Naive thymus-derived CD8-positive, alpha-beta T cell (primary cell): ENCODE measurements at regions of chr5 and their contacts with region 1.

Region 1: DNA sequence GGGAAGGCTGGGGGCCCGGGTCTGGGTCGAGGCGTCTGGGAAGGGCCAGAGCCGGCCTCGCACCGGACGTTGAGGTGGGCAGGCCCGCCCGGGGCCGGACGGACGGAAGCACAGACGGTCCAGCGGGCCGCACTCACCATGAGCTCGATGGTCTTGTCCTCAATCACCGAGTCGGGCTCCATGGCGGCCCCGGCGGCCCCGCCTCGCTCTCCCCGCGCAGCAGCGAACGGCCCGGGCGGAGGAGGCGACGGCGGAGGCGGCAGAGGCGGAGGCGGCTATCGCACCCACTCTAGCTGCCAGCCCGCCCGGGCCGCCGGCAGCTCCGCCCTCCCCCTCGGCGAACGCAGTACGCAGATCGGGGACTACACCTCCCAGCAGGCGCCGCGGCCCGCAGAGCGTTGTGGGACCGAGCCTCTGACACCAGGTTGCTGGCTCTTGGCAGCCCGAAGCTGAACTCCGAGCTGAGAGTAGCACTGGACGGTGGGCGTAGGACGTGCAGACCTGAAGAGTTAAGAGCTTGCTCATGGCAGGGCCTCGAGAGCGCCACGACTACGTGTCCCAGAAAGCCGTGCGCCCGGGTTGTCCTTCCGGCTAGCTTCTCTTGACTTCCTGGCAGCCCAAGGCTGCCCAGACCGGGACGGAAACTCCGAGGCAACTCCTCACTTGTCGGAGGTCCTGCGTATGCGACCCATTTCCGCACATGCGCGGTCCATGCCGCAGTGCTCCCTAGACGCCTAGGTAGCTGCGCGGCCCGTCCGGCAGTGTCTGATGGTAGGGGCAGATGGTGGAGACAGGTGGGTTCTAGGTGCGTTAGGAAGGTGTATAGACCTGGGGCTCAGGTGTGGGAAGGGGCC is at the start of gene FBXW11:
- DNase-seq: peak; percentile 86 to 98 (median 93)
- ATAC-seq: peak; percentile 87 to 89
- H3K4me3 Mint-ChIP-seq: peak within 1 kb of the TSS; percentile 93 to 100 (median 98)
- H3K27ac Mint-ChIP-seq: peak within 1 kb of the TSS; percentile 98 to 100 (median 99)
- H3K4me1 Mint-ChIP-seq: peaks cover 34 to 53% (median 51%) of the 10 kb centered on the region in 4 donors
- H3K27me3 Mint-ChIP-seq: no peaks in the 10 kb centered on the region
- polyA plus RNA-seq, gene FBXW11: 13.5 to 18.3 (median 16.2) TPM

Region 2: GRCh38 chr5:171387345-171387969 is 619.1 kb before region 1 on chr5 and contains the start of gene NPM1:
- POLR2A ChIA-PET with region 1: interaction called, 19 read pairs
- DNase-seq: peak; percentile 94 to 99 (median 98)
- ATAC-seq: peak; percentile 84 to 86
- H3K4me3 Mint-ChIP-seq: peak within 1 kb of the TSS; percentile 91 to 99 (median 98)
- H3K27ac Mint-ChIP-seq: peak within 1 kb of the TSS; percentile 98 to 100 (median 100)
- H3K4me1 Mint-ChIP-seq: peaks cover 25 to 56% (median 46%) of the 10 kb centered on the region in 4 donors
- H3K27me3 Mint-ChIP-seq: peaks cover 0 to 7% (median 0%) of the 10 kb centered on the region in 5 donors
- polyA plus RNA-seq, gene NPM1: 960 to 1,086 (median 1,032) TPM

Region 3: DNA sequence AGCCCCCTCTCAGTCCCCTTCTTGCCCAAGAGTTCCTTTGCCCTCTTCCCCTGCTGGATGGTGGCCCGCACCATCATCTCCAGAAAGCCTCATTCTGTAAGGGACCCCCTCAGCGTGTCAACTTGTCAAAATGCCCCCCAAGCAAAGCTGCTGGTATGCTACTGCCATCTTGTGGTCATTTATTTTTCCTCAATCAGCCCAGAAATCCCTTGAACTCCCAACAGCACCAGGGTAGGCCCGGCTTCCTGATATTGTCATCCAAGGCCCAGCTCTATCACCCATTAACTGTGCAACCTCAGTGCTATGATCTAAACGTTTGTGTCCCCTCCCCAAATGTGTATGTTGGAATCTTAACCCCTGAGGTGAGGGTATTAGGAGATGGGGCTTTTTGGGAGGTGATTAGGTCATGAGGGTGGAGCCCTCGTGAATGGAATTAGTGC is 53.1 kb after region 1 on chr5:
- POLR2A ChIA-PET with region 1: interaction called, 11 read pairs
- DNase-seq: peak in 1 of 10 donors; percentile 34
- ATAC-seq: peak in 1 of 2 donors; percentile 39
- H3K4me3 Mint-ChIP-seq: peak overlapping the region in 4 of 10 donors; percentile 33 to 51 (median 36)
- H3K27ac Mint-ChIP-seq: peak overlapping the region; percentile 45 to 92 (median 86)
- H3K4me1 Mint-ChIP-seq: peaks cover 40 to 47% (median 44%) of the 10 kb centered on the region in 4 donors
- H3K27me3 Mint-ChIP-seq: no peaks in the 10 kb centered on the region

Region 4: DNA sequence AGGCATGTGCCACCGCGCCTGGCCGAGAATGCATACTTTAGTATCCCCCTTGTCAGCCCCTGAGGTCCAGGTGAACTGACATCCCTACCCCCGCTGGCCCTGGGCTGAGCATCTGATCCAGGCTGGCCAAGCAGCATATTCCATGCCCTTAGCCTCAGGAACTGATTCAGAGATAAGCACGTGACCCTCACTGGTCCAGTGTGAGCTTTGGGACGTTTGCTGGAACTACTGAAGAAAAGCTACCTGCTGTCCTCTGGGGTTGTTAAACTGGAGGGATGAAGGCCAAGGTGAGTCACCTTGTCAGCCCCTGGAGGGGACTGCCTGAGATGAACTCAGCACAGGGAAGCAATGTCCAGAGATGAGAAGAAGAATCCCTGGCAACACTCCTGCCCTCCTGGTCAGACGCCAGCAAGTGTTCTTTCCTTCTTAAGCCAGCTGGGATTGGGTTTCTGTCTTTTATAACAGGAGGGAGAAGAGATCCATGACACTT is 59.0 kb after region 1 on chr5:
- POLR2A ChIA-PET with region 1: interaction called, 33 read pairs
- DNase-seq: no peak
- ATAC-seq: no peak
- H3K4me3 Mint-ChIP-seq: peak overlapping the region in 9 of 10 donors; percentile 8 to 88 (median 77)
- H3K27ac Mint-ChIP-seq: peak overlapping the region; percentile 92 to 99 (median 96)
- H3K4me1 Mint-ChIP-seq: peaks cover 38 to 76% (median 73%) of the 10 kb centered on the region in 4 donors
- H3K27me3 Mint-ChIP-seq: no peaks in the 10 kb centered on the region